GM12878 (cell line): ENCODE measurements at regions of chr12 and their contacts with region 1.

Region 1: GRCh38 chr12:98612696-98613334 is 19.3 kb downstream of the SLC25A3 start:
- DNase-seq: peak; percentile 38
- ATAC-seq: peak; percentile 94
- H3K4me3 ChIP-seq: no peak overlapping the region
- H3K27ac ChIP-seq: peak overlapping the region; percentile 49
- H3K4me1 ChIP-seq: peaks cover 7% of the 10 kb centered on the region; the same call in 1 of the 2 replicates
- H3K27me3 ChIP-seq: no peaks in the 10 kb centered on the region
- CTCF ChIP-seq: 0 out of 6 replicates have a peak, but pooled peaks of 1 of the 3 experiments have one; percentile 8
- EP300 ChIP-seq: no peak
- POLR2A ChIP-seq: no peak
- RAD21 ChIP-seq: no peak

Region 2: GRCh38 chr12:98574110-98574509 is 38.7 kb before region 1 on chr12:
- CTCF ChIA-PET with region 1: no interaction called
- POLR2A ChIA-PET with region 1: no interaction called
- RAD21 ChIA-PET with region 1: no interaction called
- SMC1A ChIA-PET with region 1: no interaction called
- in situ Hi-C with region 1: no loop called
- intact Hi-C with region 1: no loop called
- DNase-seq: no peak
- ATAC-seq: peak; percentile 37
- H3K4me3 ChIP-seq: no peak overlapping the region
- H3K27ac ChIP-seq: no peak overlapping the region
- H3K4me1 ChIP-seq: no peaks in the 10 kb centered on the region
- H3K27me3 ChIP-seq: no peaks in the 10 kb centered on the region
- CTCF ChIP-seq: no peak
- EP300 ChIP-seq: no peak
- POLR2A ChIP-seq: no peak
- RAD21 ChIP-seq: no peak

Region 3: GRCh38 chr12:98635657-98636323 is 23.0 kb after region 1 on chr12:
- CTCF ChIA-PET with region 1: interaction called, 6 read pairs
- POLR2A ChIA-PET with region 1: interaction called, 4 read pairs
- RAD21 ChIA-PET with region 1: interaction called, 3 read pairs
- SMC1A ChIA-PET with region 1: interaction called, 18 read pairs
- in situ Hi-C with region 1: no loop called
- intact Hi-C with region 1: no loop called
- DNase-seq: peak; percentile 44
- ATAC-seq: peak; percentile 92
- H3K4me3 ChIP-seq: peak overlapping the region; percentile 16; the same call in 1 of the 2 replicates
- H3K27ac ChIP-seq: peak overlapping the region; percentile 37; the same call in 1 of the 2 replicates
- H3K4me1 ChIP-seq: peaks cover 20% of the 10 kb centered on the region
- H3K27me3 ChIP-seq: no peaks in the 10 kb centered on the region
- CTCF ChIP-seq: no peak
- EP300 ChIP-seq: peak in 1 of 2 experiments; percentile 40; a peak in 1 of 4 replicates
- POLR2A ChIP-seq: no peak
- RAD21 ChIP-seq: no peak

Region 4: DNA sequence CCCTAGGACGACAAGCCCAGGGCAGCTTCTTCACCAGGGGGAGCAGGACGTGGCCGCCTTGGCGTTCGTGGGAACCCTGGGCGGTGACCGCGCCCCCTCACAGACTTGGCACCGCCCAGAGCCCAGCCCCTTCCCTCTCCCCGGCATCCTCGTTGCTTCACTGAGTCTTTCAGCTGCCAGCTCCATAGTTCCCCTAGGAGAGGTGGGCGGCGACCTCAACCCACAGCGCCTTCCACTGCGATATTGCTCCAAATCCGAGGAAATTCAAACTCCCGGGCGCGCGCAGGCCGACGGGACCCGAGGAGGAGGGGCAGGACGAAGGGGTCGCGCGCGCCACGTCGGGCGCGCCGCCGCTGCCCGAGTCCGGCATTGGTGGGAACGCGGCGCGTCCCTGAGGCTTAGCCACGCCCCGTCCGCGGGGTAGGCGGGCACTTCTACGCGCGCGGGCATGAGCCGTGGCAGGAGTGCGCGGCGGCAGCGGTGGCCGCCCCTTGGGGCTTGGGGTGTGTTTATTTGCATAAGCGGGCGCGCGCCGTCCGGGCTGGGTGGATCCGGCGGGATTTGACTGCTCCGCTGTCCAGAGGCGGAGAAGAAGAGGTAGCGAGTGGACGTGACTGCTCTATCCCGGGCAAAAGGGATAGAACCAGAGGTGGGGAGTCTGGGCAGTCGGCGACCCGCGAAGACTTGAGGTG is 32.0 kb after region 1 on chr12 and contains the starts of genes APAF1 and IKBIP:
- CTCF ChIA-PET with region 1: interaction called, 19 read pairs
- POLR2A ChIA-PET with region 1: interaction called, 7 read pairs
- RAD21 ChIA-PET with region 1: interaction called, 6 read pairs
- SMC1A ChIA-PET with region 1: interaction called, 13 read pairs
- in situ Hi-C with region 1: no loop called
- intact Hi-C with region 1: loop called (anchors 2 kb)
- DNase-seq: peak; percentile 76
- ATAC-seq: peak; percentile 87
- H3K4me3 ChIP-seq: peak within 1 kb of the TSS; percentile 98
- H3K27ac ChIP-seq: peak within 1 kb of the TSS; percentile 94
- H3K4me1 ChIP-seq: no peaks in the 10 kb centered on the region
- H3K27me3 ChIP-seq: no peaks in the 10 kb centered on the region
- CTCF ChIP-seq: no peak
- EP300 ChIP-seq: 0 out of 4 replicates have a peak, but pooled peaks of 1 of the 2 experiments have one; percentile 5
- POLR2A ChIP-seq: peak; percentile 85
- RAD21 ChIP-seq: no peak
- polyA plus RNA-seq, gene APAF1: 4.2 to 5.0 TPM
- polyA plus RNA-seq, gene IKBIP: 5.4 to 12.2 TPM